ENCODE measurements at regions of chr10 and their contacts with region 1.

Region 1: DNA sequence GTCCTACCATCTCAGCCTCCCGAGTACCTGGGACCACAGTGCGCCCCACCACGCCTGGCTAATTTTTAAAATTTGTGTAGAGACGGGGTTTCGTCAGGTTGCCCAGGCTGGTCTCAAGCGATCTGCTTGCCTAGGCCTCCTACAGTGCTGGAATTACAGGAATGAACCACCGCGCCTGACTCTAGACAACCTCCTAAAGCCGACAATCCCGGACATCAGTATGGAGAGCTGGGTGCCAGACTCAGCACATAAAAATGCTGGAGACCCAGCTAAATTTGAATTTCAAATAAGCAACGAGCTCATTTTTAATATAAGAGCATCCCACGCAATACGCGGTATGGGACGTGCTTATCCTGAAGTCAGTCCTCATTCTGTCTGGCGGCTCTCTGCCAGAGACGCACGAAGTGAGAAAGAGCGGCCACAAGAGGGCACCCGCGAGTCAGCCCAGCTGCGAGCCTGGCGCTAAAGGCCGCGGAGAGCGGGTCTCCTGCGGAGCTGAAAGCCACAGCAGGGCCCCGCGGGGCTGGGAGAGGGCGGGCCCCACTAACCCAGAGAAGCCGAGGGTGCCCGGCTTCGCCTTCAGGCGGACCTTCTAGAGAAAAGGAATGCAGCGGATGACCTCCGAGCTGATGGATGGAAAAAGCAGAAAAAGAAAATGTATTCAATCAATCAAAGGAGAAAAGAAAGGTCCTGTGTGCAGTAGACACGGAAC is 7.0 kb downstream of the CALY start:
- H3K4me3 ChIP-seq: no peak overlapping the region
- H3K27ac ChIP-seq: no peak overlapping the region
- H3K4me1 ChIP-seq: peaks cover 11% of the 10 kb centered on the region
- CTCF ChIP-seq: peak; percentile 84; the same call in 1 of the 2 replicates

Region 2: DNA sequence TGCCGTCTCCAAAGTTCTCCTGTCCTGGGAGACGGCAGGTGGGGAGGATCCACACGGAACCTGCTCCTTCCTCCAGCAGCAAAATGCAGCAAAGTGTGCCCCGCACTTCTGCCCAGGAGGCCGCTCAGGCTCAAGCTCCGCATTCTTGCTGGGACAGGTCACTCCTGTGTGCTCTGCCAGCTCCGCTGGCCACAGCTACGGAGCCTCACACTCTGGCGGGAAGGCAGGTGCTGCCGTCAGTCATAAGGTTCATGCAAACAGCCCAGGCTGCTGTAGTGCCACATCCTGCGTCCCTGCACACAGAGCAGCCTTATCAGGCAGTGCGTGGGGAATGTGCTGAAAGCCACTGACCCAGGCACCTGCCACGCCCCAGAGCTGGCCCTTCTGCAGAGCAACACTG is 219.5 kb before region 1 on chr10:
- CTCF ChIA-PET with region 1: no interaction called
- POLR2A ChIA-PET with region 1: no interaction called
- H3K4me3 ChIP-seq: no peak overlapping the region
- H3K27ac ChIP-seq: no peak overlapping the region
- H3K4me1 ChIP-seq: no peaks in the 10 kb centered on the region
- CTCF ChIP-seq: no peak

Region 3: DNA sequence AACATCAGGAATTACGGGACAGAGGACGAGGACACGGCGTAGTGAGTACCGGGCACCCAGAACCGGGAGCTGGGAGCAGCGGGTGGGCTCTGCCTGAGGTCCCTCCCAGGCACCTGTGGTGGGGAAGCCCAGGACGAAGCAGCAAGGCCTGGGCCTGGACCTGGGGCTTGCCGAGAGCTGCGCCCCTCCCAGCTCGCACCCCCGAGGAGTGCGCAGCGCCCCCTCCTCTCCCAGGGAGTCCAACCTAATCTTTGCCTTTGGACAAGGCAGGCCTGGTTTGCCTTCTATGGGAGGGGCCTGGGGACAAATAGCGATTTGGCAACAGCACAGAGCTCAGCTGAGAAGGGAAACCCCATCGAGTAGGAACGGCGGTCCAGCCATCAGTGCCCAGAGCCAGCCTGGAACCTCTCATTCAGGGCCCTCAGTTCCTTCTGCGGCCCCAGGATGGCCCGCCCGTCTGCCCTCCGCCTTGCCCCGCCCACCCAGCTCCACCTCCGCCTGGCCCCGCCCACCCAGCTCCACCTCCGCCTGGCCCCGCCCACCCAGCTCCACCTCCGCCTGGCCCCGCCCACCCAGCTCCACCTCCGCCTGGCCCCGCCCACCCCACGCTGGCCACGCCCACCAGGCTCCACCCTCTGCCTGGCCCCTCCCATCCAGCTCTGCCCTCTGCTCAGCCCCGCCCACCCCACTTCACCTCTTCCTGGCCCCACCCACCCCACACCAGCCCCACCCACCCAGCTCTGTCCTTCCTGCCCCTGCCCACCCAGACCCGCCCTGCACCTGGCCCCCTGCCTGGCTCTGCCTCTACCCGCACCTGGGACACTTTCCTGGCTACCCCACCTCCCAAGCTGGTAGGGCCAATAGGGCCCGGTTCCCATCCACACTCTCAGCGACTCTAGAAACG is 202.1 kb before region 1 on chr10:
- CTCF ChIA-PET with region 1: no interaction called
- POLR2A ChIA-PET with region 1: no interaction called
- H3K4me3 ChIP-seq: no peak overlapping the region
- H3K27ac ChIP-seq: no peak overlapping the region
- H3K4me1 ChIP-seq: no peaks in the 10 kb centered on the region
- CTCF ChIP-seq: no peak

Region 4: DNA sequence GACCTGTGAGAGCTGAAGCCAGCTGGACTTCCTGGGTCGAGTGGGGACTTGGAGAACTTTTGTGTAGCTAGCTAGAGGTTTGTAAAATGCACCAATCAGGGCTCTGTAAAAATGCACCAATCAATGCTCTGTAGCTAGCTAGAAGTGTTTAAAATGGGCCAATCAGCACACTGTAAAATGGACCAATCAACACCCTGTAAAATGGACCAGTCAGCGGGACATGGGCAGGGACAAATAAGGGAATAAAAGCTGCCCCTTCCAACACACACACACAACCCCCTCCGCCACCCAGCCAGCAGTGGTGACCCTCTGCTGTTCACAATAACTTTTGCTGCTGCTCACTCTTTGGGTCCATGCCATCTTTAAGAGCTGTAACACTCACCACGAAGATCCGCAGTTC is 13.8 kb before region 1 on chr10:
- CTCF ChIA-PET with region 1: interaction called, 20 read pairs
- POLR2A ChIA-PET with region 1: interaction called, 15 read pairs
- H3K4me3 ChIP-seq: no peak overlapping the region
- H3K27ac ChIP-seq: no peak overlapping the region
- H3K4me1 ChIP-seq: no peaks in the 10 kb centered on the region
- CTCF ChIP-seq: no peak

Region 5: GRCh38 chr10:133343558-133343957 is 13.9 kb after region 1 on chr10:
- CTCF ChIA-PET with region 1: interaction called, 11 read pairs
- POLR2A ChIA-PET with region 1: no interaction called
- H3K4me3 ChIP-seq: no peak overlapping the region
- H3K27ac ChIP-seq: no peak overlapping the region
- H3K4me1 ChIP-seq: no peaks in the 10 kb centered on the region
- CTCF ChIP-seq: no peak

Region 6: GRCh38 chr10:133353202-133353959 is 23.7 kb after region 1 on chr10:
- CTCF ChIA-PET with region 1: interaction called, 10 read pairs
- POLR2A ChIA-PET with region 1: interaction called, 4 read pairs
- H3K4me3 ChIP-seq: no peak overlapping the region
- H3K27ac ChIP-seq: no peak overlapping the region
- H3K4me1 ChIP-seq: no peaks in the 10 kb centered on the region
- CTCF ChIP-seq: no peak

Region 7: DNA sequence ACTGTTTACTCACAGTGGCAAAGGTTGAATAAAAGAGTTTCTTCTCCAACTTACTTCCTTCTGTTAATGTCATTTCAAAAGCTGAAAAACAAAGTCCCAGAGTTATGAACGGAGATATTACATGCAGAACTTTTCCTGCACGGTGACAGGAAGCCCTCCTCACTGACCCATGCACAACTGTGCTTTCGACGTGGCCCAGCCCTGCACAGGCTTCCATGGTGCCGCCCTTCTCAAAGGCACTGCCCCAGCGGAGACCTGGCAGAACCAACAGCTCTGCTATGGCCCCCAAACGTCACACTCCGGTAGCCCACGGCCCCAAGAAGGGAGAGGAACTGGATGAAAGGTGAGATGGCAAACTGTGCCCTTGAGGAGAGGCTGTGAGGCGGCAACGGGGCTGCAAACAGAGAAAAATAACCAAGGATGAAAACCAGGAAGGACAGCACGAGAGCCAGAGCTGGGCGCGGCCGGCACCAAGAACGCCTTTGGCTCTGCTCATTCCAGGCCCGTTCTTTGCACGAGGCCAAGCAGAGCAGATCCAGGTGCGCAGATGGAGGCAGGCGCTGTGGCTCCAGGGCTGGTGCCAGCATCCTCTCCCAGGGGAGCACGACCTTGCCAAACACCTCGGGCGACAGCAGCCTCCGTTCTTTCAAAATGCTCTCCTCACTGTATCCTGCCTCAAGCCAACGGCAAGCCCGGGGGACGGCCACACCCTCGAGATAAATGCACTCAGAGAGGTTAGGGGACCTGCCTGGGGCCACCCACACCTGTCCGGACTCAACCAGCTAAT is 35.2 kb after region 1 on chr10:
- CTCF ChIA-PET with region 1: interaction called, 27 read pairs
- POLR2A ChIA-PET with region 1: no interaction called
- H3K4me3 ChIP-seq: no peak overlapping the region
- H3K27ac ChIP-seq: no peak overlapping the region
- H3K4me1 ChIP-seq: no peaks in the 10 kb centered on the region
- CTCF ChIP-seq: no peak

Region 8: GRCh38 chr10:133388236-133388972 is 58.8 kb after region 1 on chr10:
- CTCF ChIA-PET with region 1: interaction called, 12 read pairs
- POLR2A ChIA-PET with region 1: no interaction called
- H3K4me3 ChIP-seq: no peak overlapping the region
- H3K27ac ChIP-seq: no peak overlapping the region
- H3K4me1 ChIP-seq: 0 out of 2 replicates have a peak, but pooled peaks cover 2% of the 10 kb centered on the region
- CTCF ChIP-seq: no peak

Region 9: DNA sequence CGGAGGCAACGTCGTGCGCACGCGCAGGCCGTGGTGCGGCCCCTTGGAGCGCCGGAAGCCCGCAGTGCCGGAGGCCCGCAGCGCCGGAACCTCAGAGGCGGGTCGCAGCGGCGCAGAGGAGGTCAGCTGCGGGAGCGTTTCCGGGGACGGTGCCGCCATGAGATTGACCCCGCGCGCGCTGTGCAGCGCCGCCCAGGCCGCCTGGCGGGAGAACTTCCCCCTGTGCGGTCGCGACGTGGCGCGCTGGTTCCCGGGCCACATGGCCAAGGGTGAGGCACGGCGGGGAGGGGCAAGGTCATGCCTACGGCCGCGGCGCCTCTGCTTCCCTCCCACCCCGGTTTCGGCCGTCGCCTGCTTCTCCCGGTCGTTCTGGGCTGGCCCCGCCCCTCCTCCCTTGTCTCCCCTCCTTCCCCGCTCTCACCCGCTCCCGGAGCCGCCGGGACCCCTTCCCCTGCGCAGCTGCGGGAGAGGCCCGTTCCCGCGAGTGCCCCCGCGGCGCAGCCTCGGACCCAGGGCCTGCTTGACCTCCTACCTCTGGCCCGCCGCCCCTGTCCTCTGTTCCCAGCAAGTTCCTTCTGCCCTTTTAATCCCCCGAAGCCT is 64.5 kb after region 1 on chr10 and contains the start of gene MTG1:
- CTCF ChIA-PET with region 1: interaction called, 10 read pairs
- POLR2A ChIA-PET with region 1: no interaction called
- H3K4me3 ChIP-seq: peak within 1 kb of the TSS; percentile 96
- H3K27ac ChIP-seq: peak within 1 kb of the TSS; percentile 74
- H3K4me1 ChIP-seq: 0 out of 2 replicates have a peak, but pooled peaks cover 2% of the 10 kb centered on the region
- CTCF ChIP-seq: peak; percentile 97

Measured in HEK293 (cell line).